ENCODE measurements at regions of chr5 and their contacts with region 1.

Region 1: GRCh38 chr5:84274585-84275468 is 109.9 kb downstream of the EDIL3 start:
- DNase-seq: peak; percentile 15
- CTCF ChIP-seq: peak; percentile 49

Region 2: GRCh38 chr5:83718195-83718825 is 556.5 kb before region 1 on chr5:
- in situ Hi-C with region 1: loop called (anchors 25 kb)
- DNase-seq: peak; percentile 62
- CTCF ChIP-seq: peak; percentile 66

Region 3: DNA sequence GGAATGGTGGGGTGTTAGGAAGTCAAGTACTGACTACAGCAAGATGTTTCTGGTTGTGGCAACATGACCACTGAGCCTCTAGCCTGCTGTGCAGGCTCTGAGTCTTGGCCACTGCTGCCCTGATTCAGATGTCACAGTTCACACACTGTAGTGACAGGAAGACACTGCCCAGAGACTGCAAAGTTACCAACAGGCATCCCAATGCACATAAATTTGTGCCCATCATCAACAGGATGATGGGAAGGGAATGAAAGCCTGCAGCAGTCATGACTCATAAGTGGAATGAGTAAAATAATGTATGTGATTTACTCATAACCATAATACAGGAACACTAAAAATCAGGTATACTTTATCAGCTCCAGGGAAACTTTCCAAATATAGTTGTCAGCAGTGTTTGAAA is 302.6 kb before region 1 on chr5:
- in situ Hi-C with region 1: no loop called
- DNase-seq: no peak
- CTCF ChIP-seq: no peak

Region 4: GRCh38 chr5:84518370-84518769 is 243.5 kb after region 1 on chr5:
- in situ Hi-C with region 1: no loop called
- DNase-seq: no peak
- CTCF ChIP-seq: no peak

Measured in GM13976 (cell line).